MCF 10A (cell line): ENCODE measurements at regions of chr16 and their contacts with region 1.

Region 1: GRCh38 chr16:46973207-46973995 is at the start of gene DNAJA2:
- DNase-seq: peak; percentile 87
- H3K4me3 Mint-ChIP-seq: peak within 1 kb of the TSS; percentile 74
- H3K27ac Mint-ChIP-seq: peak within 1 kb of the TSS; percentile 96
- H3K4me1 Mint-ChIP-seq: peaks cover 12% of the 10 kb centered on the region
- H3K27me3 Mint-ChIP-seq: no peaks in the 10 kb centered on the region
- CTCF ChIP-seq: no peak
- total RNA-seq, gene DNAJA2: 64.7 and 64.8 TPM in 2 replicates

Region 2: DNA sequence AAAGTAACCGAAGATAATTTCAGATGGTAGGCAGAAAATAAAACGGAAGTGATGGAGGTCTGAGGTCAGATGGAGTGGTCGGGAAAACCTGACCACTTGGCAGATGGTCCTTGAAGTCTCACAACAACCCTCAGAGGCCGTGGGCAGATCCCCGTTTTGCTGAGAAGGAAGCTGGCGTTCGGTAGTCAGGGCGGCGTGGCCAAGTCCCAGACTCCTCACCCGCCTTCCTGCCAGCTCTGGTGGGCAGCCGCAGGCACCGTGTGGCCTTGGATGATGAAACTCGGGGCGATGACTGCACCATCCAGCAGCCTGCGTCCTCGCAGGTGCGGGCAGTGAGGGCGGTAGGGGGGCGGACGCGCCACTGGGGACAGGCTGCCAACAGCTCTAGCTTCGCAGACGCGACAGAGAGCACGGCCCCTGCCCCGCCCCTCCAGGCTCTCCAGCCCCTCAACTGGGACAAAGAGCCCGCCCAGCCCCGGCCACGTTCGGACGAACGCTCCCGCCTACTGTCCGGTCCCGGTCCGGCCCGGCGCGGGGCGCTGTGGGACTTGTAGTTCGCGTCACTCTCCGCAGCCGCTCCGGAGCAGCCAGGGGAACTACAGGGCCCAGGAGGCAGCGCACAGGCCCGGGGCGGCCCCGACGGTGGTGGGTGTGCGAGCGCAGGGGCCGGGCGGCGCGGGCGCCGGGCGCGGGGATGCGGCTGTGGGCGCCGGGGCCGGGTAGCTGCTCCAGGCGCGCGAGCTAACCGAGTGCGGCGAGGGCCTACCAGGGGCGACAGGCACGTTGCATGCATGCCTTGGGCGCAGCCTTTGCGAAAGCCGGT is 89.5 kb before region 1 on chr16 and contains the start of gene GPT2:
- CTCF ChIA-PET with region 1: interaction called, 3 read pairs
- POLR2A ChIA-PET with region 1: interaction called, 24 read pairs
- intact Hi-C with region 1: no loop called
- DNase-seq: peak; percentile 97
- H3K4me3 Mint-ChIP-seq: peak within 1 kb of the TSS; percentile 73
- H3K27ac Mint-ChIP-seq: peak within 1 kb of the TSS; percentile 90
- H3K4me1 Mint-ChIP-seq: peaks cover 26% of the 10 kb centered on the region
- H3K27me3 Mint-ChIP-seq: no peaks in the 10 kb centered on the region
- CTCF ChIP-seq: peak; percentile 24
- total RNA-seq, gene GPT2: 44.7 and 60.6 TPM in 2 replicates

Region 3: GRCh38 chr16:46961373-46962353 is 11.7 kb before region 1 on chr16:
- CTCF ChIA-PET with region 1: interaction called, 5 read pairs
- POLR2A ChIA-PET with region 1: interaction called, 22 read pairs
- intact Hi-C with region 1: no loop called
- DNase-seq: no peak
- H3K4me3 Mint-ChIP-seq: no peak overlapping the region
- H3K27ac Mint-ChIP-seq: no peak overlapping the region
- H3K4me1 Mint-ChIP-seq: peaks cover 6% of the 10 kb centered on the region
- H3K27me3 Mint-ChIP-seq: no peaks in the 10 kb centered on the region
- CTCF ChIP-seq: no peak

Region 4: GRCh38 chr16:47018223-47018891 is 45.0 kb after region 1 on chr16:
- CTCF ChIA-PET with region 1: interaction called, 5 read pairs
- POLR2A ChIA-PET with region 1: interaction called, 3 read pairs
- intact Hi-C with region 1: loop called (anchors 2 kb)
- DNase-seq: peak; percentile 61
- H3K4me3 Mint-ChIP-seq: no peak overlapping the region
- H3K27ac Mint-ChIP-seq: no peak overlapping the region
- H3K4me1 Mint-ChIP-seq: no peaks in the 10 kb centered on the region
- H3K27me3 Mint-ChIP-seq: no peaks in the 10 kb centered on the region
- CTCF ChIP-seq: peak; percentile 37

Region 5: GRCh38 chr16:47460711-47461597 is 487.6 kb after region 1 on chr16 and contains the starts of genes ITFG1 and PHKB:
- CTCF ChIA-PET with region 1: no interaction called
- POLR2A ChIA-PET with region 1: interaction called, 14 read pairs
- intact Hi-C with region 1: no loop called
- DNase-seq: peak; percentile 90
- H3K4me3 Mint-ChIP-seq: peak within 1 kb of the TSS; percentile 94
- H3K27ac Mint-ChIP-seq: peak within 1 kb of the TSS; percentile 99
- H3K4me1 Mint-ChIP-seq: peaks cover 35% of the 10 kb centered on the region
- H3K27me3 Mint-ChIP-seq: no peaks in the 10 kb centered on the region
- CTCF ChIP-seq: no peak
- total RNA-seq, gene ITFG1: 35.4 and 44.0 TPM in 2 replicates
- total RNA-seq, gene PHKB: 62.2 and 67.3 TPM in 2 replicates